ENCODE measurements at regions of chr12 and their contacts with region 1.

Region 1: DNA sequence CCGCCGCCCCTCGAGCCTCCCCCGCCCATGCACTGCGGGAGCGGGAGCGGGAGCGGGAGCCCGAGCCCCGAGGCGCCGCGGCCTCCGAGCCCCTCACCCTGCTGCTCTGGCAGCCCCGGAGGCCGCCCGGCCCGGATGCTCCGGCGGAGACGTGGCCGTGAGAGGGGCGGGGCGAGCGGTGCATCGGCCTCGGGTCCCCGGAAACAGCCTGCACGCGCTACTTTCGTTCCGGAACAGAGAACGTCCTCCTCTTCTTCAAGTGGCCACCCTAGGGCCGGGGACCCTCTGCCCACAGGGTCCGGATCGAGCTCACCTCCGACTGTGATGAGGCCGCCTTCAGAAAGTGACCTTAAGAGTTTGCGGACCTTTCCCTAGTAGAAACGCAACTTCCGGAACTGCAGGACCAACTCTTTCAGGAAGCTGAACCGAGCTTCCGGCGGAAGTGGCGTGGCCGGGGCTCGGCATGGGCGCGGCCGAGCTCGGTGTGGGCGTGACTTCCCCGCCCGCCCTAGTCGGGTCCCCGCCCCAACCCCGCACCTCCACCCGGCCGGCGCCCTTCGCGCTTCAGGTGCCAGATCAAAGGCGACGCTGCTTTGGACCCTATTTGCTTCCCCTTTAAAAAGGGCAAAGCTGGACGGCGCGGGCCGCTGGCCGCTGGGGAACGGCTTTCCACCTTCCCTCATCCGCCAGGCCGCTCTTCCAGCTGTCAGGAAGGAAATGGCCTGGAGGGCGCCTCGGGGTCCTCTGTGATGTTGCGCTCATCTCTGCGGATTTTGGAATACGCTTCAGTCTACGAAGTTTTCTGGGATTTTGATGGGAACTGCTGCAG is at the start of gene GOLGA3:
- DNase-seq: peak; percentile 94 to 98
- ATAC-seq: peak; percentile 92 to 95 (median 94)
- H3K4me3 ChIP-seq: peak within 1 kb of the TSS; percentile 98
- H3K4me3 Mint-ChIP-seq: peak within 1 kb of the TSS; percentile 96
- H3K27ac ChIP-seq: peak within 1 kb of the TSS; percentile 100
- H3K27ac Mint-ChIP-seq: peak within 1 kb of the TSS; percentile 98
- H3K4me1 ChIP-seq: peaks cover 29% of the 10 kb centered on the region
- H3K4me1 Mint-ChIP-seq: peaks cover 35 to 37% of the 10 kb centered on the region in 2 donors
- H3K27me3 ChIP-seq: no peaks in the 10 kb centered on the region
- H3K27me3 Mint-ChIP-seq: no peaks in the 10 kb centered on the region
- CTCF ChIP-seq: no peak
- total RNA-seq, gene GOLGA3: 39.1 to 54.3 (median 50.9) TPM

Region 2: GRCh38 chr12:132657004-132657683 is 171.8 kb before region 1 on chr12:
- intact Hi-C with region 1: no loop called
- DNase-seq: no peak
- ATAC-seq: no peak
- H3K4me3 ChIP-seq: no peak overlapping the region
- H3K4me3 Mint-ChIP-seq: no peak overlapping the region
- H3K27ac ChIP-seq: no peak overlapping the region
- H3K27ac Mint-ChIP-seq: no peak overlapping the region
- H3K4me1 ChIP-seq: no peaks in the 10 kb centered on the region
- H3K4me1 Mint-ChIP-seq: no peaks in the 10 kb centered on the region
- H3K27me3 ChIP-seq: no peaks in the 10 kb centered on the region
- H3K27me3 Mint-ChIP-seq: no peaks in the 10 kb centered on the region
- CTCF ChIP-seq: no peak

Region 3: DNA sequence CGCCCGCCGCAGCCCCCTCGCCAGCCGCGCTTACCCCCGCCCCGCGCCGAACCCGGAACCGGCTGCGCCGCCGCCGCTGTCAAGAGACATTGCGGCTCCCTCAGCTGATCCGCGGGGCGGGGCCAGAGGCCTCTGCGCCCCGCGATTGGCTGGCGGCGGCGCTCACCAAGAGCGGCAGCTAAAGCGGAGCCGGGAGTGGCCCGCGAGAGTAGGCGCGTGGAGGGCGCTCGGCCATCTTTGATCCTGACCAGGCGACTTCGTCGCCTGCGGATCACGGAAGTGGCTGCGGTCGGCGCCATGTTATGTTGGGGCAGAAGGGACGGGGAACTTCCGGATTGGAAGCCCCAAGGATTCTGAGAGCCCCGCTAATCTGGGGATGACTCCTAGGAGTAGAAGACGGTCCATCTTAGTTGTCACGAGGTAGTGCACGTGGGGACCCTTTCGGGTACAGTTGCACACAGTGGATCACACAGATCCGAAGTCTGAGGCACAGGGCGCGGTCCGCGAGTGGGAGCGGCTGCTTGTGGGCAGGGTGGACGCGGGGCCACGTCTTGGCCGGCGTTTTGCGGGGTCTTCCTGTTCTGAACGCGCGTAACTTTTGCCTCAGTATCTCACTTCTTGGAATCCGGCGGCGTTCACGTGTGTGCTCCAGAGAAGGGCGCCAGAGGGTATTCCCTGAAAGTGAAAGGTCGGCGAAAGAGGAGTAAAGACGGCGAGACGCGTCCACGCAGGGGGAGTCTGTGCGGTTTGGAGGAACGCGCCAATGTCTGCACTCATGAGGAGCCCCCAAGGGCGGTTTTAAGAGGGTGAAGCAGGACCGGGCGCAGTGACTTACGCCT is 58.8 kb after region 1 on chr12 and contains the start of gene CHFR:
- intact Hi-C with region 1: loop called (anchors 2 kb)
- DNase-seq: peak; percentile 92 to 97
- ATAC-seq: peak; percentile 97 to 100 (median 97)
- H3K4me3 ChIP-seq: peak within 1 kb of the TSS; percentile 91
- H3K4me3 Mint-ChIP-seq: peak within 1 kb of the TSS; percentile 98
- H3K27ac ChIP-seq: peak within 1 kb of the TSS; percentile 99
- H3K27ac Mint-ChIP-seq: peak within 1 kb of the TSS; percentile 100
- H3K4me1 ChIP-seq: peaks cover 12% of the 10 kb centered on the region
- H3K4me1 Mint-ChIP-seq: peaks cover 16 to 22% of the 10 kb centered on the region in 2 donors
- H3K27me3 ChIP-seq: no peaks in the 10 kb centered on the region
- H3K27me3 Mint-ChIP-seq: peaks cover 8 to 10% of the 10 kb centered on the region in 2 donors
- CTCF ChIP-seq: no peak
- total RNA-seq, gene CHFR: 161 to 170 (median 168) TPM

Region 4: GRCh38 chr12:133106253-133106652 is 277.3 kb after region 1 on chr12:
- intact Hi-C with region 1: no loop called
- DNase-seq: peak in 1 of 2 donors; percentile 5
- ATAC-seq: no peak
- H3K4me3 ChIP-seq: no peak overlapping the region
- H3K4me3 Mint-ChIP-seq: no peak overlapping the region
- H3K27ac ChIP-seq: no peak overlapping the region
- H3K27ac Mint-ChIP-seq: no peak overlapping the region
- H3K4me1 ChIP-seq: no peaks in the 10 kb centered on the region
- H3K4me1 Mint-ChIP-seq: no peaks in the 10 kb centered on the region
- H3K27me3 ChIP-seq: no peaks in the 10 kb centered on the region
- H3K27me3 Mint-ChIP-seq: no peaks in the 10 kb centered on the region
- CTCF ChIP-seq: no peak